Breast epithelium (tissue), 4 donors: ENCODE measurements at regions of chr1 and their contacts with region 1.

Region 1: GRCh38 chr1:155918660-155919059 is 7.5 kb upstream of the RIT1 start:
- DNase-seq: no peak
- H3K4me3 ChIP-seq: no peak overlapping the region
- H3K27ac ChIP-seq: no peak overlapping the region
- H3K4me1 ChIP-seq: no peaks in the 10 kb centered on the region
- H3K27me3 ChIP-seq: no peaks in the 10 kb centered on the region
- CTCF ChIP-seq: no peak
- POLR2A ChIP-seq: no peak

Region 2: GRCh38 chr1:155609515-155610256 is 309.0 kb before region 1 on chr1 and contains the start of gene MSTO1:
- intact Hi-C with region 1: no loop called
- DNase-seq: peak; percentile 96 to 98
- H3K4me3 ChIP-seq: peak within 1 kb of the TSS; percentile 38 to 80 (median 72)
- H3K27ac ChIP-seq: peak within 1 kb of the TSS; percentile 84
- H3K4me1 ChIP-seq: no peaks in the 10 kb centered on the region
- H3K27me3 ChIP-seq: no peaks in the 10 kb centered on the region
- CTCF ChIP-seq: no peak
- POLR2A ChIP-seq: peak; percentile 35
- total RNA-seq, gene MSTO1: 9.6 to 44.2 (median 35.4) TPM

Region 3: GRCh38 chr1:156591432-156592157 is 672.9 kb after region 1 on chr1 and contains the start of gene NAXE:
- intact Hi-C with region 1: loop called (anchors 5 kb)
- DNase-seq: peak; percentile 45 to 71
- H3K4me3 ChIP-seq: peak within 1 kb of the TSS; percentile 71 to 89 (median 74)
- H3K27ac ChIP-seq: peak within 1 kb of the TSS; percentile 83 to 85
- H3K4me1 ChIP-seq: peaks cover 0 to 7% of the 10 kb centered on the region in 2 donors
- H3K27me3 ChIP-seq: no peaks in the 10 kb centered on the region
- CTCF ChIP-seq: no peak
- POLR2A ChIP-seq: no peak
- total RNA-seq, gene NAXE: 70.4 to 90.5 (median 75.5) TPM